Activated T-helper 1 cell treated with anti-CD3 and anti-CD28 coated beads, Interleukin-12 subunit alpha, Interleukin-12 subunit beta, Interleukin-2, Interleukin-4 antibody, amounts not matched to agents 30 ng/mL and 10 ng/mL and 1 ng/mL, durations not matched to agents 14 hours and 24 hours and 36 hours (primary cell): ENCODE measurements at regions of chr5 and their contacts with region 1.

Region 1: GRCh38 chr5:100777680-100778281 is 125.3 kb downstream of the ST8SIA4 start:
- DNase-seq: no peak
- H3K4me3 Mint-ChIP-seq: peak overlapping the region; percentile 34
- H3K27ac Mint-ChIP-seq: peak overlapping the region; percentile 70
- H3K4me1 Mint-ChIP-seq: peaks cover 42% of the 10 kb centered on the region
- H3K27me3 Mint-ChIP-seq: no peaks in the 10 kb centered on the region

Region 2: DNA sequence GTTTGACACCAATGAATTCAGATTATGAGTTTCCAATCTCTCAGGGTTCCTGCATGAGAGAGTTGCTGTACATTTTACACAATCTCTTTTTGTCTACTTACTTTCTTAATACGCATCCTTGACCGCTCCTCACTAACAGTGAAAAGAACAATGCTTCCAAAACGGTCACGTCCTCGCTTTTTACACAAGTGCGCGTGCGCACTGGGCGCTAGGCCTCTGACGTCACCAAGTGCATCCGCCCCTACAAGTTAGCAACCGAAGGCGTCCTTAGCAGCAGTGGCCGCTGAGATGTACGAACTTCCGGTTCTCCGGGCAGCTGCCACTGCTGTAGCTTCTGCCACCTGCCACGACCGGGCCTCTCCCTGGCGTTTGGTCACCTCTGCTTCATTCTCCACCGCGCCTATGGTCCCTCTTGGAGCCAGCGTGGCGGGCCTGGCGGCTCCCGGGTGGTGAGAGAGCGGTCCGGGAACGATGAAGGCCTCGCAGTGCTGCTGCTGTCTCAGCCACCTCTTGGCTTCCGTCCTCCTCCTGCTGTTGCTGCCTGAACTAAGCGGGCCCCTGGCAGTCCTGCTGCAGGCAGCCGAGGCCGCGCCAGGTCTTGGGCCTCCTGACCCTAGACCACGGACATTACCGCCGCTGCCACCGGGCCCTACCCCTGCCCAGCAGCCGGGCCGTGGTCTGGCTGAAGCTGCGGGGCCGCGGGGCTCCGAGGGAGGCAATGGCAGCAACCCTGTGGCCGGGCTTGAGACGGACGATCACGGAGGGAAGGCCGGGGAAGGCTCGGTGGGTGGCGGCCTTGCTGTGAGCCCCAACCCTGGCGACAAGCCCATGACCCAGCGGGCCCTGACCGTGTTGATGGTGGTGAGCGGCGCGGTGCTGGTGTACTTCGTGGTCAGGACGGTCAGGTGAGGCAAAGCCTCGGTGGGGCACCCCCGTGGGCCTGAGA is 242.4 kb before region 1 on chr5 and contains the start of gene FAM174A:
- intact Hi-C with region 1: loop called (anchors 1 kb)
- DNase-seq: peak; percentile 92
- H3K4me3 Mint-ChIP-seq: peak within 1 kb of the TSS; percentile 92
- H3K27ac Mint-ChIP-seq: peak within 1 kb of the TSS; percentile 99
- H3K4me1 Mint-ChIP-seq: peaks cover 25% of the 10 kb centered on the region
- H3K27me3 Mint-ChIP-seq: peaks cover 6% of the 10 kb centered on the region
- total RNA-seq, gene FAM174A: 8.2 and 9.7 TPM in 2 replicates

Region 3: GRCh38 chr5:100761192-100761591 is 16.6 kb before region 1 on chr5:
- intact Hi-C with region 1: loop called (anchors 2 kb)
- DNase-seq: no peak
- H3K4me3 Mint-ChIP-seq: no peak overlapping the region
- H3K27ac Mint-ChIP-seq: no peak overlapping the region
- H3K4me1 Mint-ChIP-seq: peaks cover 4% of the 10 kb centered on the region
- H3K27me3 Mint-ChIP-seq: peaks cover 14% of the 10 kb centered on the region

Region 4: DNA sequence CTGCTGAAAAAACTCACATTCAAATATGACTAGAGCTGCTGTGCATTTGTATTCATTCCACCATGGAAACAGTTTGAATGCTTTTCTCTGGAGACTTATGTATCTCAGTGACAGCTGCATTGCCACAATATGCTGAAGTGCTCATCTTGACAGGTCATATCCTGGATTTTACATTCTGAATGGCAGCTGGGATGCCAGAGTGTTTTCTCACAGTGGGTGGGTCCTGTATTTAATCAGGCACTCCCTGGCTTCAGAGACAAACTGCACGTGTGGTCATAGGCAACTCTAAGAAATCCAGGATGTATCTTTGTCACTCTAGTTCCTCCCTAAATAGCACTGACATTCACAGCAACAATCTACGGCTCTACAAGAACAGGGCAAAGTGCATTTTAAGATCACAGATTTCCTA is 49.7 kb after region 1 on chr5:
- intact Hi-C with region 1: loop called (anchors 10 kb)
- DNase-seq: no peak
- H3K4me3 Mint-ChIP-seq: no peak overlapping the region
- H3K27ac Mint-ChIP-seq: peak overlapping the region; percentile 31
- H3K4me1 Mint-ChIP-seq: peaks cover 36% of the 10 kb centered on the region
- H3K27me3 Mint-ChIP-seq: no peaks in the 10 kb centered on the region

Region 5: GRCh38 chr5:100852988-100853449 is 75.2 kb after region 1 on chr5:
- intact Hi-C with region 1: loop called (anchors 1 kb)
- DNase-seq: no peak
- H3K4me3 Mint-ChIP-seq: peak overlapping the region; percentile 81
- H3K27ac Mint-ChIP-seq: peak overlapping the region; percentile 96
- H3K4me1 Mint-ChIP-seq: peaks cover 39% of the 10 kb centered on the region
- H3K27me3 Mint-ChIP-seq: no peaks in the 10 kb centered on the region

Region 6: GRCh38 chr5:100890461-100891008 is 112.8 kb after region 1 on chr5:
- intact Hi-C with region 1: loop called (anchors 1 kb)
- DNase-seq: no peak
- H3K4me3 Mint-ChIP-seq: peak overlapping the region; percentile 81
- H3K27ac Mint-ChIP-seq: peak overlapping the region; percentile 94
- H3K4me1 Mint-ChIP-seq: peaks cover 85% of the 10 kb centered on the region
- H3K27me3 Mint-ChIP-seq: no peaks in the 10 kb centered on the region